ENCODE measurements at regions of chr10 and their contacts with region 1.

Region 1: GRCh38 chr10:119189811-119190282 is 11.2 kb upstream of the PRDX3 start:
- DNase-seq: no peak
- ATAC-seq: peak; percentile 88
- H3K4me3 ChIP-seq: no peak overlapping the region
- H3K27ac ChIP-seq: no peak overlapping the region
- H3K4me1 ChIP-seq: peaks cover 14% of the 10 kb centered on the region
- H3K27me3 ChIP-seq: no peaks in the 10 kb centered on the region
- CTCF ChIP-seq: no peak
- EP300 ChIP-seq: no peak
- POLR2A ChIP-seq: no peak
- RAD21 ChIP-seq: no peak

Region 2: DNA sequence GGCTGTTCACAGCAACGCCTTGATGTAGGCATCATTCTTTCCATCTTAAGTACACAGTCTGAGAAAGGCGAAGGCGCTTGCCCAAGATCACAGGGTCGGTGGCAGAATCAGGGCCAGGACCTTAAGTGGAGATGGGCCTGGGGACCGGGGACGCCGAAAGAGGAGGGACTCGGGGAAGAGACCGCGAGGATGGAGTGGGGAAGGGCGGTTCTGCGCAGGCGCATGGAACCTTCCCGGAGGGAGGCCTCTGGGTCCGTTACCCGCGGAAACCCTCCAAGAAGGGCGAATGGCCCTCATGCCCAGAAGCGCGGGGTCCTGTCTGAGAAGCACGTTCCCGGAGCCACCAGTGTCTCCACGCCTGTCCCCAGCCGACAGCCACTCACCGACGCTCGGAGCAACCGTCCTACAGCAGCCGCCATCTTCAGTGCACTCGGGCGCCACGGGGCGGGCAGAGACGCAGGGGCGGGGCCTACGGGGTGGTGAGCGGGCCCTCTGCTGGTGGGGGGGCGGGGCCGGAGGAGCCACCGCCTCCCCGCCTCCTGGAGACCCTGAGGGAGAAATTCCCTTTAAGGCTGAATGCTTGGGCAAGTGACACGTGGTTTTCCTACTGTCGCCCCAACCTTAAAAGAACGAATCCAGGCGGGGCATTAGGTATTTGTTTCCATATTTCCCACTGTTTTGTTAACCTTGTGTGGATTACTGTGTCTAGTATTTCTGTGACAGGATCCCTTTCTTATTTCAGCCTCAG is 11.3 kb before region 1 on chr10 and contains the start of gene PRDX3:
- CTCF ChIA-PET with region 1: interaction called, 17 read pairs
- POLR2A ChIA-PET with region 1: interaction called, 18 read pairs
- RAD21 ChIA-PET with region 1: interaction called, 4 read pairs
- SMC1A ChIA-PET with region 1: interaction called, 14 read pairs
- in situ Hi-C with region 1: no loop called
- intact Hi-C with region 1: no loop called
- DNase-seq: peak; percentile 72
- ATAC-seq: peak; percentile 98
- H3K4me3 ChIP-seq: peak within 1 kb of the TSS; percentile 100
- H3K27ac ChIP-seq: peak within 1 kb of the TSS; percentile 74
- H3K4me1 ChIP-seq: peaks cover 14% of the 10 kb centered on the region
- H3K27me3 ChIP-seq: no peaks in the 10 kb centered on the region
- CTCF ChIP-seq: peak in 1 of 3 experiments; percentile 6; a peak in 2 of 6 replicates
- EP300 ChIP-seq: no peak
- POLR2A ChIP-seq: peak; percentile 99
- RAD21 ChIP-seq: no peak
- polyA plus RNA-seq, gene PRDX3: 827 to 1,431 TPM

Region 3: GRCh38 chr10:119250641-119251314 is 60.9 kb after region 1 on chr10:
- CTCF ChIA-PET with region 1: no interaction called
- POLR2A ChIA-PET with region 1: no interaction called
- RAD21 ChIA-PET with region 1: no interaction called
- SMC1A ChIA-PET with region 1: no interaction called
- in situ Hi-C with region 1: no loop called
- intact Hi-C with region 1: no loop called
- DNase-seq: no peak
- ATAC-seq: peak; percentile 44
- H3K4me3 ChIP-seq: no peak overlapping the region
- H3K27ac ChIP-seq: no peak overlapping the region
- H3K4me1 ChIP-seq: no peaks in the 10 kb centered on the region
- H3K27me3 ChIP-seq: no peaks in the 10 kb centered on the region
- CTCF ChIP-seq: no peak
- EP300 ChIP-seq: no peak
- POLR2A ChIP-seq: no peak
- RAD21 ChIP-seq: no peak